ENCODE measurements at regions of chr5 and their contacts with region 1.

Region 1: GRCh38 chr5:42992091-42992879 is 47.8 kb downstream of the ANXA2R start:
- DNase-seq: peak; percentile 84
- H3K4me3 ChIP-seq: peak overlapping the region; percentile 71
- H3K27ac ChIP-seq: peak overlapping the region; percentile 96
- H3K4me1 ChIP-seq: peaks cover 41% of the 10 kb centered on the region
- H3K27me3 ChIP-seq: peaks cover 98% of the 10 kb centered on the region
- CTCF ChIP-seq: no peak

Region 2: GRCh38 chr5:43008369-43009153 is 16.3 kb after region 1 on chr5:
- intact Hi-C with region 1: loop called (anchors 2 kb)
- DNase-seq: peak; percentile 84
- H3K4me3 ChIP-seq: peak overlapping the region; percentile 65
- H3K27ac ChIP-seq: peak overlapping the region; percentile 92
- H3K4me1 ChIP-seq: peaks cover 29% of the 10 kb centered on the region
- H3K27me3 ChIP-seq: peaks cover 75% of the 10 kb centered on the region
- CTCF ChIP-seq: peak; percentile 9